ENCODE measurements at regions of chr5 and their contacts with region 1.

Region 1: GRCh38 chr5:149035372-149035790 is 27.5 kb downstream of the SH3TC2 start:
- DNase-seq: peak; percentile 52 to 74 (median 56)
- ATAC-seq: peak; percentile 99
- H3K4me3 ChIP-seq: no peak overlapping the region
- H3K27ac ChIP-seq: no peak overlapping the region
- H3K4me1 ChIP-seq: no peaks in the 10 kb centered on the region; a peak in 1 of 5 replicates
- H3K27me3 ChIP-seq: peaks cover 0 to 16% of the 10 kb centered on the region in 2 experiments; a peak in 3 of 5 replicates
- CTCF ChIP-seq: peak; percentile 84 to 90 (median 90)
- EP300 ChIP-seq: no peak
- POLR2A ChIP-seq: no peak
- RAD21 ChIP-seq: peak; percentile 88 to 89

Region 2: GRCh38 chr5:148179234-148179824 is 856.1 kb before region 1 on chr5:
- CTCF ChIA-PET with region 1: no interaction called
- POLR2A ChIA-PET with region 1: no interaction called
- in situ Hi-C with region 1: loop called (anchors 25 kb)
- intact Hi-C with region 1: no loop called
- DNase-seq: peak in 3 of 4 experiments; percentile 6 to 67 (median 6)
- ATAC-seq: peak; percentile 67; the same call in 2 of the 3 replicates
- H3K4me3 ChIP-seq: no peak overlapping the region
- H3K27ac ChIP-seq: no peak overlapping the region
- H3K4me1 ChIP-seq: no peaks in the 10 kb centered on the region
- H3K27me3 ChIP-seq: no peaks in the 10 kb centered on the region
- CTCF ChIP-seq: peak; percentile 48 to 71 (median 61); a peak in 5 of 6 replicates
- EP300 ChIP-seq: no peak
- POLR2A ChIP-seq: no peak
- RAD21 ChIP-seq: peak; percentile 89

Region 3: DNA sequence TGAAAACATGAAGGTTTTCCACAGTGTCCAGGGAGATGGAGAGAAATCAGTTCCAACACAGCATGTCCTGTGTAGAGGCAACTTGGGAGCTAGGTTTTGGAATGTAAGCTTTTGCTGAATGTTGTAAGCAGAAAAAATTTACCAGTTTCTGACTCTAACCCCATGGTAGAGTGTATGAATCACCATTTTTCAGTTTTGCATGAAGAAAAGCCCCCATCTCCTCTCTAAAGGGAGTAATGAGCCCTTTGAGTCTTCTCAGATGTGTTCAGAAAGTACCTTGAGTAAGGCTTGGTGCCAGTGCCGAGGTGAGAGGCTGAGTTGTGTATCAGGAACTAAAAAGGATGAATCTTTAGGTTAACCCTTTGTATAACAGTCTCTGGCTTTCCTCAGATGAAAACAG is 112.8 kb before region 1 on chr5:
- CTCF ChIA-PET with region 1: no interaction called
- POLR2A ChIA-PET with region 1: no interaction called
- in situ Hi-C with region 1: no loop called
- intact Hi-C with region 1: no loop called
- DNase-seq: no peak
- ATAC-seq: no peak
- H3K4me3 ChIP-seq: no peak overlapping the region
- H3K27ac ChIP-seq: no peak overlapping the region
- H3K4me1 ChIP-seq: no peaks in the 10 kb centered on the region
- H3K27me3 ChIP-seq: no peaks in the 10 kb centered on the region; a peak in 1 of 5 replicates
- CTCF ChIP-seq: no peak
- EP300 ChIP-seq: no peak
- POLR2A ChIP-seq: no peak
- RAD21 ChIP-seq: no peak

Measured in K562 (cell line).